SK-N-SH (cell line): ENCODE measurements at regions of chr15 and their contacts with region 1.

Region 1: DNA sequence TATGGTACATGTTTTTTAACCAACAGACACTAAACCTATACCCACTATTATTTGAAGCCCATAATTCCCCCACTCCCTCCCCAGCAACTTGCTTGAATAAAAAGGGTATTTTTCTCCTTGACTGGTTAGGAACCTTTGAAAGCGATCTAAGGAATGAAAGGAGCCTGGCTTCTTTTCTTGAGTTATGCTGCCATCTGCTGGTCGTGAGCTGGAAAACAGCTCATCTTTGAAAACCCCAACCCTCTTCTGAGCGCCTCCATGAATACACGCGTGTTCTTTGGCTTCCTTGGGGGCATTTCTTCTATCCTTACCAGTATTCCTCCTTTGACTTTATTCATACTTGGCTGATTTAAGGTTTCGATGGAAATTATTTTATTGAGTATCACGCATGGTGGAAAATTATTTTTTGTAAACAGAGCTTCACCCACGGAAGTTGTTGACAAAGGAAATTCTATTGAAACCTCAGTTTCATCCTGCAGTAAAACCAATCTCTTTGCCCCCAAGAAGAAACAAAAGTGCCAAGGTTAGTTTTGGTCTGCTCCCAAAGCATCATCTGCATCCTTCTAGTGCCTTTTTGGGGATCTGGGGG is 171.6 kb downstream of the SV2B start:
- DNase-seq: peak; percentile 69
- H3K4me3 ChIP-seq: peak overlapping the region in 1 of 2 experiments; percentile 42; a peak in 1 of 4 replicates
- H3K27ac ChIP-seq: no peak overlapping the region
- H3K4me1 ChIP-seq: no peaks in the 10 kb centered on the region
- H3K27me3 ChIP-seq: no peaks in the 10 kb centered on the region
- CTCF ChIP-seq: peak; percentile 86
- EP300 ChIP-seq: no peak
- RAD21 ChIP-seq: peak; percentile 95

Region 2: GRCh38 chr15:91049378-91050127 is 222.1 kb before region 1 on chr15:
- CTCF ChIA-PET with region 1: interaction called, 61 read pairs
- POLR2A ChIA-PET with region 1: no interaction called
- DNase-seq: peak; percentile 64
- H3K4me3 ChIP-seq: peak overlapping the region in 1 of 2 experiments; percentile 11; a peak in 1 of 4 replicates
- H3K27ac ChIP-seq: no peak overlapping the region
- H3K4me1 ChIP-seq: peaks cover 0 to 2% of the 10 kb centered on the region in 2 experiments; a peak in 1 of 4 replicates
- H3K27me3 ChIP-seq: peaks cover 10% of the 10 kb centered on the region; the same call in 1 of the 2 replicates
- CTCF ChIP-seq: peak; percentile 74
- EP300 ChIP-seq: no peak
- RAD21 ChIP-seq: peak; percentile 93

Region 3: GRCh38 chr15:91068966-91069365 is 202.7 kb before region 1 on chr15:
- CTCF ChIA-PET with region 1: interaction called, 10 read pairs
- POLR2A ChIA-PET with region 1: no interaction called
- DNase-seq: no peak
- H3K4me3 ChIP-seq: no peak overlapping the region
- H3K27ac ChIP-seq: no peak overlapping the region
- H3K4me1 ChIP-seq: peaks cover 0 to 7% of the 10 kb centered on the region in 2 experiments; a peak in 1 of 4 replicates
- H3K27me3 ChIP-seq: no peaks in the 10 kb centered on the region
- CTCF ChIP-seq: no peak
- EP300 ChIP-seq: no peak
- RAD21 ChIP-seq: no peak

Region 4: GRCh38 chr15:91224755-91225380 is 46.8 kb before region 1 on chr15:
- CTCF ChIA-PET with region 1: interaction called, 18 read pairs
- POLR2A ChIA-PET with region 1: no interaction called
- DNase-seq: peak; percentile 68
- H3K4me3 ChIP-seq: no peak overlapping the region; a peak in 1 of 4 replicates
- H3K27ac ChIP-seq: no peak overlapping the region
- H3K4me1 ChIP-seq: no peaks in the 10 kb centered on the region; a peak in 1 of 4 replicates
- H3K27me3 ChIP-seq: no peaks in the 10 kb centered on the region
- CTCF ChIP-seq: peak; percentile 69
- EP300 ChIP-seq: no peak
- RAD21 ChIP-seq: peak; percentile 84